GM12878 (cell line): ENCODE measurements at regions of chr12 and their contacts with region 1.

Region 1: DNA sequence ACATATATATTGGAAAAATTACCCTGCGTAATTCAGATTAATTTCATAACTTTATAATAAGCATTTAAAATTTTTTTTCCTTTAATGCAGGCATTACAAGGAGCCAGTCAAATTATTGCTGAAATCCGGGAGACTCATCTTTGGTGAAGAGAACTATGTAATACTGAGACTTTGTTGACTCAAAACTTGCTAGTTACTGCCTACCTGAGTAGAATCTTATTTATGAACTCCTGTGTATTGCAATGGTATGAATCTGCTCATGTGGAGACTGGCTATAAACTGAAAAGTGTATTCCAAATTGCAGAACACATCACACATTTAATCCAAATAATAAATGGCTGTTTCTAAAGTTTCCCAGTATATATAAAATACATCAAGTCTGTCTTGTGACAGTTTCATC is 12.4 kb downstream of the YARS2 start:
- DNase-seq: no peak
- ATAC-seq: no peak
- H3K4me3 ChIP-seq: no peak overlapping the region
- H3K27ac ChIP-seq: no peak overlapping the region
- H3K4me1 ChIP-seq: no peaks in the 10 kb centered on the region
- H3K27me3 ChIP-seq: no peaks in the 10 kb centered on the region
- CTCF ChIP-seq: no peak
- EP300 ChIP-seq: no peak
- POLR2A ChIP-seq: no peak
- RAD21 ChIP-seq: no peak

Region 2: GRCh38 chr12:32501835-32502333 is 241.4 kb before region 1 on chr12:
- CTCF ChIA-PET with region 1: no interaction called
- POLR2A ChIA-PET with region 1: no interaction called
- RAD21 ChIA-PET with region 1: no interaction called
- SMC1A ChIA-PET with region 1: no interaction called
- in situ Hi-C with region 1: no loop called
- intact Hi-C with region 1: no loop called
- DNase-seq: no peak
- ATAC-seq: no peak
- H3K4me3 ChIP-seq: no peak overlapping the region
- H3K27ac ChIP-seq: no peak overlapping the region
- H3K4me1 ChIP-seq: no peaks in the 10 kb centered on the region
- H3K27me3 ChIP-seq: no peaks in the 10 kb centered on the region; a peak in 1 of 4 replicates
- CTCF ChIP-seq: no peak
- EP300 ChIP-seq: no peak
- POLR2A ChIP-seq: no peak
- RAD21 ChIP-seq: no peak

Region 3: DNA sequence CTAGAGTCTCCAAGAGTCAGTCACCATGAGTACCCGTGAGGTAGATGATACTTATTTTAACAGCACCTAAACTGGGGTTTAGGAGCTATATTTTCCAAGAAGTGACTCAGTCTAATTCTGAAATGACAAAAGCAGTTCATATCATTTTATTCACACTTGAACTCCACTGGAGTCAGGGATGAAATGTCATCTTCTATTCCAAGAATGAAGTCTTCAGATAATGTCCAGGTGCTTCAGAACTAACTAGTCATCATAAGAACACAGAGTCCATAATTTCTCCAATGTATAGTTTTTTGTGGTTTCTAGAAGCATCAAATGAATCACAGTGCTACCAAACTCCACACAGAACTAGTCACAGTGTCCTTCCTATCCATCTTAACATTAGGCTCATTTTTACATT is 50.9 kb before region 1 on chr12:
- CTCF ChIA-PET with region 1: no interaction called
- POLR2A ChIA-PET with region 1: interaction called, 4 read pairs
- RAD21 ChIA-PET with region 1: no interaction called
- SMC1A ChIA-PET with region 1: no interaction called
- in situ Hi-C with region 1: loop called (anchors 5 kb)
- intact Hi-C with region 1: no loop called
- DNase-seq: no peak
- ATAC-seq: peak; percentile 42
- H3K4me3 ChIP-seq: no peak overlapping the region
- H3K27ac ChIP-seq: no peak overlapping the region
- H3K4me1 ChIP-seq: no peaks in the 10 kb centered on the region
- H3K27me3 ChIP-seq: no peaks in the 10 kb centered on the region
- CTCF ChIP-seq: no peak
- EP300 ChIP-seq: no peak
- POLR2A ChIP-seq: no peak
- RAD21 ChIP-seq: no peak